ENCODE measurements at regions of chr22 and their contacts with region 1.

Region 1: GRCh38 chr22:25582946-25583345 is 18.5 kb downstream of the GRK3 start:
- DNase-seq: no peak
- ATAC-seq: no peak
- H3K4me3 ChIP-seq: no peak overlapping the region
- H3K27ac ChIP-seq: no peak overlapping the region
- H3K4me1 ChIP-seq: no peaks in the 10 kb centered on the region; a peak in 1 of 5 replicates
- H3K27me3 ChIP-seq: no peaks in the 10 kb centered on the region
- CTCF ChIP-seq: no peak
- EP300 ChIP-seq: no peak
- POLR2A ChIP-seq: no peak
- RAD21 ChIP-seq: no peak

Region 2: DNA sequence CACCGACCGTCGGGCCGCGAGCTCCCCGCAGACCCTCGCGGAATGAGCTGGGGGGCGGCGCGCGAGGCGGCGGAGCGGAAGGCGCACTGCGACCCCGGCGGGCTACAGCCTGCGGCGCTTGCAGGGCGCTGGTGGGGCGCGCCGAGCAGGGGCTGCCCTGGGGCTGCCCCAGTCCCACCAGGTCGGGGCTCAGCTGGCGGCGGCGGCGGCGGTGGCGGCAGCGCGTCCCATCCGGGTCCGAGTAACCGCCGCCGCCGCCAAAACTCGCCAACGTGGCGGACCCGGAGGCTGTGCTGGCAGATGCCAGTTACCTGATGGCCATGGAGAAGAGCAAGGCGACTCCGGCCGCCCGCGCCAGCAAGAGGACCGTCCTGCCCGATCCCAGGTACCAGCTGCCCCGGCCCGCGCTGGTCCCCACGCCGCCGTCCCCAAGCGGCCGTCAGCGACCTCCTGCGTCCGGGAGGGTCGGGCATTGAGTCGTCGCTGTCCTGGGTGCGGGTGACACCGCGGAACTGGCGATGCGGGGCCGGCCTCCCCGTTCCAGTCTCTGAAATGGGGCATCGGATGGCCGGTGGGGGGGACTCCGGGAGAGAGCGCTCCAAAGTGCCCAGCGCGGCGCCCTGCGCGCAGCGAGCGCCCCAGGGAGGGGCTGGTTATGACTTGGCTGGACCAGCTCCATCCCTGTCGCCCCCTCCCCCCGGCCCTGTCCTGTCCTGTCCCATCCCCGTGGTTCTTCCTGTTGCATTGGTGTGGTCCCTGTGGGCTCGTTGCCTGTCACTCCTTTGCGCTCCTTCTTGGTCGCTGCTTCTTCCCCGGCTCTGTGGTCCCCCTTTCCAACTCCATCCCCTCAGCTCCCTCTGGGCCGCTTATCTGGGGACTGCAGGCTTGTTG is 300.0 kb before region 1 on chr22:
- CTCF ChIA-PET with region 1: no interaction called
- POLR2A ChIA-PET with region 1: no interaction called
- in situ Hi-C with region 1: loop called (anchors 5 kb)
- intact Hi-C with region 1: loop called (anchors 10 kb)
- DNase-seq: no peak
- ATAC-seq: no peak
- H3K4me3 ChIP-seq: no peak overlapping the region
- H3K27ac ChIP-seq: no peak overlapping the region
- H3K4me1 ChIP-seq: no peaks in the 10 kb centered on the region; a peak in 1 of 5 replicates
- H3K27me3 ChIP-seq: peaks cover 0 to 17% of the 10 kb centered on the region in 2 experiments; a peak in 4 of 5 replicates
- CTCF ChIP-seq: no peak
- EP300 ChIP-seq: no peak
- POLR2A ChIP-seq: no peak
- RAD21 ChIP-seq: no peak

Region 3: DNA sequence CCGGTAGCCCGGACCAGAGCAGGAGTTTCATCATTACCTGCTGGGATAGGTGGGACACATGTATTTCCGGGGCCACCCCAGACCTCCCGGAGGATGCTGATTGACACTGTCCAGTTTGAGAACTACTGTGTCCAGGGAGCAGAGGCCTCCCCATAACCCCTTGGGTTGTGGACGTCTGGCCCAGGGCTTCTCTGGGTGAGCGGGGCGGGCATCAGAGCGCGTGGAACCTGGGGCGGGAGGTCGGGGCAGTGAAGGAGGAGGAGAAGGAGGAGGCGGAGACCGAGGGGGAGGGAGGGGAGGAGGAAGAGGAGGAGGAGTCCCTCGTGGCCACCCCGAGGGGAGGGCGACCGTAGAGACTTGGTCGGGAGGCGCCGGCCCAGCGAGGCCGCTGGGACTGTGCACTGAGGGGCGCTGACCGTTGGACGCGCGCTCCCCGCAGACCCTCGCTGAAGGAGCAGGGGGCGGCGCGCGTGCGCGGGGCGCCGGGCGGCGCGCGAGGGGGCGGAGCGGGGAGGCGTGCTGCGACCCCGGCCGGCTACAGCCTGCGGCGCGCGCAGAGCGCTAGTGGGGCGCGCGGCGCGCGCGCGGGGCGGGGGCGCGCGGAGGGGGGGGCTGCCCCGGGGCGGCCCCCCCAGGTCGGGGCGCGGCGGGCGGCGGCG is 18.5 kb before region 1 on chr22 and contains the start of gene GRK3:
- CTCF ChIA-PET with region 1: no interaction called
- POLR2A ChIA-PET with region 1: no interaction called
- in situ Hi-C with region 1: no loop called
- intact Hi-C with region 1: no loop called
- DNase-seq: peak; percentile 69 to 88 (median 82)
- ATAC-seq: peak; percentile 87
- H3K4me3 ChIP-seq: peak within 1 kb of the TSS; percentile 82
- H3K27ac ChIP-seq: peak within 1 kb of the TSS; percentile 64; the same call in 2 of the 3 replicates
- H3K4me1 ChIP-seq: peaks cover 13 to 17% of the 10 kb centered on the region in 2 experiments
- H3K27me3 ChIP-seq: no peaks in the 10 kb centered on the region
- CTCF ChIP-seq: no peak
- EP300 ChIP-seq: no peak
- POLR2A ChIP-seq: peak; percentile 58; the same call in 1 of the 2 replicates
- RAD21 ChIP-seq: no peak
- polyA plus RNA-seq, gene GRK3: 1.4 TPM